ENCODE measurements at regions of chr9 and their contacts with region 1.

Region 1: DNA sequence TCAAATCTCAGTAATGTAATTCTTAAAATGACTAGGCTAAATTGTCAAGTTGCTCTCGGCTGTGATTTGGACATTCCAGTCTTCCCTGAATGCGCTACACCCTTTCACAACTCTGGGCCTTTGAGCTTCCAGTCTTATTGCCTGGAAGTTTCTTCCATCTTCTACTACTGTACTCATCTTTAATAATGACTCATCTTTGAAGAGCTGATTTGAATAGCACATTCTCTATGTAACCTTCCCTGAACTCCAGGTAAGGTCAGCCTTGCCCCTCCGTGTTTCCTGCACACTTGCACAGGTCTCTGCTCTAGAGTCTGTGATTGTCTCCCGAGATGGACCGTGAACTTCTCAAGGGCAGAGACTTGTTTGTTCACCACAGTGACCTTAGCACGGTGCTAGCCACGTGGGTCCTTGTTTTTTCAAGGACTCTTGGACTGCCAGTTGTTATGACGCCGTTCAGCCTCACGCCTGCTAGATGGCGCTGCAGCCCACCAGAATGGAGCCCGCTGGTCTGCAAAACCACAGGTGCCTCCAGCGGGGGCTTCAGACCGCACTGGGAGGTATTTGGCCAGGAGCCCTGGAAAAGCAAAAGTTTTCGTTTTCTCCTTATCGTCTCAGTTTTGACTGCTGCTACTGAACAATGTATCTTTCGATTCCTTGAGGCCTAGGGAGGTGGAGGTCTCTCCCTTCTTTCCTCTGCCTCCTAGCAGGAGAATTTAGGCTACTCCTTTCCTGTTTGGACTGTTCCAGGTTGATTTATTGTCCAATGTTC is 44.4 kb downstream of the SEC61B start:
- DNase-seq: peak; percentile 77
- H3K4me3 ChIP-seq: peak overlapping the region in 1 of 4 donors; percentile 1
- H3K27ac ChIP-seq: no peak overlapping the region
- H3K4me1 ChIP-seq: peaks cover 0 to 10% (median 5%) of the 10 kb centered on the region in 4 donors
- H3K27me3 ChIP-seq: no peaks in the 10 kb centered on the region
- CTCF ChIP-seq: peak; percentile 50 to 87 (median 72)
- EP300 ChIP-seq: no peak
- POLR2A ChIP-seq: no peak

Region 2: DNA sequence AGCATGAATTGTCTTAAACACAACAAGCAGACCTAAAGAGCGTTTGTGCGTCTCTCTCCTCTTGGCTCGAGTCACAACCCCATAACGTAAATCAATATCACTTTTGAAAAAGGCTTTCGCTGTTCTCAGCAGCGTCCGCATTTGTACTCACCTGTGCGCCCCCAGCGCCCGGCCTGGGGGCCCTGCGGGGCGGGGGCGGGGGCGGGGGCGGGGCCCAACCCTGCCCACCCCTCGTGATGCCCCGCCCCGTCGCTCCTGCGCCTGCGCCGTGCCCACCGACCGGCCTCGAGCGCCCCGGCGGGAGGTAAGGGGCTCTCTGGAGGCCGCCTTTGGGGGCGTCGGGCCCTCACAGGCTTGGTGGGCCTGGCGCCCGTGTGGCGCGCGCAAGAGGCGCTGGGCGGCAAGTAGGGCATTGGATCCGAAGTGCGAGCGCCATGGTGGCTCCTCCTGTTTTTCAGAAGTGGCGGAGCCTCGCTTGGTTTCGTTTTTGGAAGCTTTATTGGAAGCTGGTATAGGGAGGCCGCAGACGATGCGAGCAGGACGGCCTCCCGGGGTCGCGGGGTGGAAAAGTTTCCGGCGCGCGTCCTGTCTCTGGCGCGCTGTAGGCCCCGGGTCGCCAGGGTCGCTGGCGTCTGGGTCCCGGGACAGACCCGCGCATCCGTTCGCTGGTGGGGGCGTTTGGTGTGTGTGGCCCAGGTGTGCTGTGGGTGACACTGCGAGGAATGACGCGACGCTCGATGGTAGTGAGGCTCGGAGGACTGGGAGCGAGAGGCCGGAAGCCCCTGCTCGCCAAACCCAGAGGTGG is 640.2 kb after region 1 on chr9 and contains the start of gene STX17:
- intact Hi-C with region 1: loop called (anchors 10 kb)
- DNase-seq: peak; percentile 81
- H3K4me3 ChIP-seq: peak within 1 kb of the TSS; percentile 79 to 94 (median 81)
- H3K27ac ChIP-seq: peak within 1 kb of the TSS; percentile 95 to 99 (median 96)
- H3K4me1 ChIP-seq: peaks cover 0 to 25% (median 14%) of the 10 kb centered on the region in 4 donors
- H3K27me3 ChIP-seq: no peaks in the 10 kb centered on the region
- CTCF ChIP-seq: no peak
- EP300 ChIP-seq: no peak
- POLR2A ChIP-seq: peak; percentile 62 to 69
- total RNA-seq, gene STX17: 33.4 to 63.7 (median 39.6) TPM

Region 3: DNA sequence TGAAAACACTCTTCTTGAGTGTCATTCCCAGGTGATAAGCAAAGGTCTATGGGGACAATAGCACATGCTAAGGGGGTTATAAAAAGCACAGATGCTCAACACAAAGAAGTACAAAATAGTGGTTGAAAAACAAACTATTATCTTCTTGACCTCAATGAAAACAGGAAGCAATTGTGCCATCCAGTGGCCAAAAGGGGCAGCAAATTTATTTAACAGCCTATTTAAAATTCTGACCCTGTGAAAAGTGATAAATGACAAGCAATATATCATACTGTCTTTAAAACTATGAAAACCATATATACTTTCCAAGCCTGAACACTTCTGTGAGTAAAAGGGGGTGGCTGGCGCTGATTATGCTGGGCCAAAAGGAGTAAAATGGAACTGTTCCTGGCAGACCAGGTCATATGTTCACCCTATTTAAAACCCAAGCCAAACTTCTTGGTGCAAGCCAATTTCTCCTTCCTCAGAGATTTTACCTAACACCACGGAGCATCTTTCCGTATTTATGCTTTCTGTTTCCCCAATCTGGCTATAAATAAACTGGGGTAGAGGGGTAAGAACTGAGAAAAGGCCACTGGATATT is 1056.6 kb after region 1 on chr9:
- intact Hi-C with region 1: loop called (anchors 10 kb)
- DNase-seq: no peak
- H3K4me3 ChIP-seq: no peak overlapping the region
- H3K27ac ChIP-seq: no peak overlapping the region
- H3K4me1 ChIP-seq: no peaks in the 10 kb centered on the region
- H3K27me3 ChIP-seq: no peaks in the 10 kb centered on the region
- CTCF ChIP-seq: peak in 3 of 4 experiments; percentile 14 to 63 (median 50)
- EP300 ChIP-seq: no peak
- POLR2A ChIP-seq: no peak